Caco-2 (cell line): ENCODE measurements at regions of chr20 and their contacts with region 1.

Region 1: DNA sequence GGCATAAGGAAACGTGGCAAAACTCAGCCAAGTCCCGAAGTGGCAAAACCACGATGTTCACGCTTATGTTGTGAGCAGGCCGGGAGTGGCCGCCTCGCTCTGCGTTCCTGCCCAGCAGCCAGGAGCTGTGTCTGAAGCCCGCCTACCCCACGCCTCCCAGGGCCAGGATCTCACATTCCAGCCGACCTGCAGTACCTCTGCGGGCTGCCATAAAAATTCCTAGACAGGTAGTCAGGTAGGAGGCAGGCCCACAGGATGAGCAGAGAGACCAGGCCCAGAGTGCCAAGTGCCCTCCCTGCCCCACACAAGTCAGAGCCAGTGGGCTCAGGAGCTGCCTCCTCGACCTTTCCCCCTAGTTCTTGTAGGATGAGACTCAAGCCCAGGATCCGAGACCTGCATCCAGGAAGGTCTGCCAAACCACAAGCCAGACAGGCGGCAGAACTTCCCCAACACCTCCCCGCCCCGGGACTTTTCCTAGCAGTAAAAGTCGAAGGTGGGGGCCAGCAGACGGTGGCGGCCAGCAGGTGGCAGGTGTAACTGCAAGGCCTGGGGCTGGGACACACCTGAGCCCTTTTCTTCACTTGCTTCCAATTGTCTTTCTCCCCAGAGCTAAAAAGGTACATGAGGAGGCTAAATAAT is 16.7 kb downstream of the PMEPA1 start:
- DNase-seq: peak; percentile 97 to 98
- H3K4me3 ChIP-seq: no peak overlapping the region
- H3K4me3 Mint-ChIP-seq: peak overlapping the region; percentile 57
- H3K27ac Mint-ChIP-seq: peak overlapping the region; percentile 85
- H3K4me1 ChIP-seq: peaks cover 32% of the 10 kb centered on the region
- H3K4me1 Mint-ChIP-seq: peaks cover 36% of the 10 kb centered on the region
- H3K27me3 ChIP-seq: no peaks in the 10 kb centered on the region; the same call in 1 of the 2 replicates
- H3K27me3 Mint-ChIP-seq: no peaks in the 10 kb centered on the region
- CTCF ChIP-seq: peak; percentile 93 to 94

Region 2: DNA sequence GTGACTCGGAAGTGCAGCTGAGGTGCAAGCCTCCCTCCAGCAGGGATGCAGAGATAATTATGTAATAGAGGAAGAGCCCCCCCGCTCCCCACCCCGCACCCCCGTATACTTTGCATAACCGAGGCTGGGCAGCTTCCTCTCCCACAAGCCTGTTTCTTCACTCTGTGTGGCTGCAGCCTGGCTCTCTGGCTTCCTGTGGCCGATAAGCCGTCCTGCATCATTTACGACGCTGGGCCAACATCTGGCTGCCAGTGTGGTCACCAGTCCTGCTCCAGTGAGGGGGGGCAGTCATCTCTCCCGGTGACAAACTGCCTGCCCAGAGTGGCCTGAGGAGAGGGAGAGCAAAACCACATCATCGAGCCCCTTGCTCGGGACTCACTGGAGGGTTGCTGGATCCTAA is 242.7 kb before region 1 on chr20:
- CTCF ChIA-PET with region 1: no interaction called
- POLR2A ChIA-PET with region 1: no interaction called
- intact Hi-C with region 1: no loop called
- DNase-seq: no peak
- H3K4me3 ChIP-seq: no peak overlapping the region
- H3K4me3 Mint-ChIP-seq: no peak overlapping the region
- H3K27ac Mint-ChIP-seq: no peak overlapping the region
- H3K4me1 ChIP-seq: no peaks in the 10 kb centered on the region
- H3K4me1 Mint-ChIP-seq: no peaks in the 10 kb centered on the region
- H3K27me3 ChIP-seq: no peaks in the 10 kb centered on the region; the same call in none of the 2 replicates
- H3K27me3 Mint-ChIP-seq: peaks cover 18% of the 10 kb centered on the region
- CTCF ChIP-seq: no peak

Region 3: GRCh38 chr20:57709931-57710799 is 17.0 kb after region 1 on chr20 and contains the start of gene PMEPA1:
- CTCF ChIA-PET with region 1: interaction called, 21 read pairs
- POLR2A ChIA-PET with region 1: interaction called, 4 read pairs
- intact Hi-C with region 1: loop called (anchors 1 kb)
- DNase-seq: peak; percentile 95 to 98
- H3K4me3 ChIP-seq: peak within 1 kb of the TSS; percentile 59
- H3K4me3 Mint-ChIP-seq: peak within 1 kb of the TSS; percentile 70
- H3K27ac Mint-ChIP-seq: peak within 1 kb of the TSS; percentile 3
- H3K4me1 ChIP-seq: peaks cover 4% of the 10 kb centered on the region; the same call in 1 of the 2 replicates
- H3K4me1 Mint-ChIP-seq: peaks cover 8% of the 10 kb centered on the region
- H3K27me3 ChIP-seq: peaks cover 2% of the 10 kb centered on the region
- H3K27me3 Mint-ChIP-seq: peaks cover 20% of the 10 kb centered on the region
- CTCF ChIP-seq: no peak
- total RNA-seq, gene PMEPA1: 3.3 and 3.7 TPM in 2 replicates

Region 4: DNA sequence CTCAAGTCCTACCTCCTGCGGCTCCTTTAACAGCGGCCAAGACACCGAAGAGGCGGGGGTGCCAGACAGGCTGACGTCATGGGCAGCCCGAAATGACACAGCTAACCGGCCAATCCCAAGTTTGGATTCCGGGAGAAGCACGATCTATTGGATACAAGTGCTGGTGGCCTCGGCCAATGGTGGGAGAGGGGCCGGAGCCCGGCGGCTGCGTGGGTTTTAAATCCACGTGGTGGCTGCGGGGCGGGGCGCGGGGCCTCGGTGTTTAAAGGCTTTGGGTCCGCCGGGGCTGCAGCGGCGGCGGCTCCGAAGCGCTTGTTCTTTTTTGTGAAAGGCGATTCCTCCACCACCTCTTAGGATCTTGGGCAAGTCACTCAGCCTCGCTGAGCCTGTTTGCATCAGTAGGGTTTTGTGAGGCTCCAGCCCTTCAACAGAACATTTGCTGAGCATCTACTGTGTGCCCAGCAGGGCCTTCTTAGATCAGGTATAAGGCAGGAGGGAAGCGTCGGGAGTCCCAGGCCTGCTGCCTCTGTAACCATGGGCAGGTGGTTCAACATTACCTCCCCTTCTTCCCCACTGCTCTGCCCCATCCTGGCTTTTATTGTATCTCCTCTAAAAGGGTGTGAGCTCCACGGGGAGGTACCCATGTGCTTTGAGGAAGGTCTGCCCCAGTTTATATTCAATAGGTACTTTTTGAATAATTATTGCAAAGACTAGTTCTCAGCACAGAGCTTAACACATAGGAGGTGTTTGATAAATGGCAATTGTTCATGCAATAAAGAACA is 25.6 kb after region 1 on chr20:
- CTCF ChIA-PET with region 1: no interaction called
- POLR2A ChIA-PET with region 1: interaction called, 3 read pairs
- intact Hi-C with region 1: loop called (anchors 1 kb)
- DNase-seq: peak; percentile 99 to 100
- H3K4me3 ChIP-seq: peak overlapping the region; percentile 40
- H3K4me3 Mint-ChIP-seq: peak overlapping the region; percentile 70
- H3K27ac Mint-ChIP-seq: peak overlapping the region; percentile 58
- H3K4me1 ChIP-seq: peaks cover 8% of the 10 kb centered on the region
- H3K4me1 Mint-ChIP-seq: no peaks in the 10 kb centered on the region
- H3K27me3 ChIP-seq: peaks cover 1% of the 10 kb centered on the region; the same call in 1 of the 2 replicates
- H3K27me3 Mint-ChIP-seq: peaks cover 15% of the 10 kb centered on the region
- CTCF ChIP-seq: no peak

Region 5: GRCh38 chr20:57779461-57779886 is 86.4 kb after region 1 on chr20:
- CTCF ChIA-PET with region 1: no interaction called
- POLR2A ChIA-PET with region 1: no interaction called
- intact Hi-C with region 1: loop called (anchors 1 kb)
- DNase-seq: peak; percentile 89 to 90
- H3K4me3 ChIP-seq: no peak overlapping the region
- H3K4me3 Mint-ChIP-seq: no peak overlapping the region
- H3K27ac Mint-ChIP-seq: peak overlapping the region; percentile 52
- H3K4me1 ChIP-seq: peaks cover 19% of the 10 kb centered on the region
- H3K4me1 Mint-ChIP-seq: peaks cover 20% of the 10 kb centered on the region
- H3K27me3 ChIP-seq: no peaks in the 10 kb centered on the region
- H3K27me3 Mint-ChIP-seq: peaks cover 12% of the 10 kb centered on the region
- CTCF ChIP-seq: no peak

Region 6: DNA sequence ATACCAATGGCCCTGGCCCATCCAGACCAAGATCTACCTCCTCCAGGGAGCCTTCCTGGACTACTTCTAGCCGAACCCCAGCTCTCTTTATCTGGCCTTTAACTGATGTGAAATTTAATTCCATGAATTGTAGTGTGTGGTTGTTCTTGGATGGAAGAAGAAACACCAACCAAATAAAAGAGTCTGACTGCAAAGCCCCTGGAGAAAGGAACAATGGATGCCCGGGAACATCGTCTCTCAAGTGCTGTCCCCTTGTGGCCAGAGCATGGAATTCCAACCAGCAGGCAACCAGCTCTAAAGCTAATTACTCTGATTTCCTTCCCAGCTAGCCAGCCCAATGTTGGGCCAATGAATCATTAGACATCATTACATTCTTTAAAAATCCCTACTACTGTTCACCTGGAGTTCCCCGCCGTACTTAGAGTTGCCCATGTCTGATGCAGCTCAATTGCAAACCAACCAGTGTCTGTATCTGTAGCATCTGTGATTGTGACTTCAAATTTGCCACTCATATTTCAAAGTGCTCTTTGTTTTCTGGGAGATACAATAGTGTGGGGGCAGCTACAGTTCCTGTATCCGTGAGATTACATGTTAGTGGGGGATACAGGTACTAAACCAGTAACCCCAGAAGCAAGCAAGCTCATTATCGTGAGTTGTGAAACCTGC is 394.2 kb after region 1 on chr20:
- CTCF ChIA-PET with region 1: interaction called, 7 read pairs
- POLR2A ChIA-PET with region 1: no interaction called
- intact Hi-C with region 1: loop called (anchors 1 kb)
- DNase-seq: peak; percentile 47 to 64
- H3K4me3 ChIP-seq: no peak overlapping the region
- H3K4me3 Mint-ChIP-seq: no peak overlapping the region
- H3K27ac Mint-ChIP-seq: no peak overlapping the region
- H3K4me1 ChIP-seq: no peaks in the 10 kb centered on the region
- H3K4me1 Mint-ChIP-seq: no peaks in the 10 kb centered on the region
- H3K27me3 ChIP-seq: 0 out of 2 replicates have a peak, but pooled peaks cover 1% of the 10 kb centered on the region
- H3K27me3 Mint-ChIP-seq: peaks cover 25% of the 10 kb centered on the region
- CTCF ChIP-seq: peak; percentile 94 to 97

Region 7: GRCh38 chr20:58179432-58180099 is 486.4 kb after region 1 on chr20:
- CTCF ChIA-PET with region 1: interaction called, 5 read pairs
- POLR2A ChIA-PET with region 1: no interaction called
- intact Hi-C with region 1: loop called (anchors 1 kb)
- DNase-seq: peak in 1 of 2 experiments; percentile 87
- H3K4me3 ChIP-seq: no peak overlapping the region
- H3K4me3 Mint-ChIP-seq: peak overlapping the region; percentile 55
- H3K27ac Mint-ChIP-seq: no peak overlapping the region
- H3K4me1 ChIP-seq: peaks cover 9% of the 10 kb centered on the region
- H3K4me1 Mint-ChIP-seq: no peaks in the 10 kb centered on the region
- H3K27me3 ChIP-seq: peaks cover 7% of the 10 kb centered on the region
- H3K27me3 Mint-ChIP-seq: peaks cover 11% of the 10 kb centered on the region
- CTCF ChIP-seq: peak; percentile 97 to 100